ENCODE measurements at regions of chr7 and their contacts with region 1.

Region 1: GRCh38 chr7:80659120-80660055 is 20.9 kb downstream of the CD36 start:
- DNase-seq: no peak

Region 2: GRCh38 chr7:80403686-80404241 is 255.6 kb before region 1 on chr7:
- intact Hi-C with region 1: no loop called
- DNase-seq: no peak

Region 3: GRCh38 chr7:80517282-80517747 is 142.1 kb before region 1 on chr7:
- intact Hi-C with region 1: loop called (anchors 5 kb)
- DNase-seq: no peak